PC-3 (cell line): ENCODE measurements at regions of chr1 and their contacts with region 1.

Region 1: DNA sequence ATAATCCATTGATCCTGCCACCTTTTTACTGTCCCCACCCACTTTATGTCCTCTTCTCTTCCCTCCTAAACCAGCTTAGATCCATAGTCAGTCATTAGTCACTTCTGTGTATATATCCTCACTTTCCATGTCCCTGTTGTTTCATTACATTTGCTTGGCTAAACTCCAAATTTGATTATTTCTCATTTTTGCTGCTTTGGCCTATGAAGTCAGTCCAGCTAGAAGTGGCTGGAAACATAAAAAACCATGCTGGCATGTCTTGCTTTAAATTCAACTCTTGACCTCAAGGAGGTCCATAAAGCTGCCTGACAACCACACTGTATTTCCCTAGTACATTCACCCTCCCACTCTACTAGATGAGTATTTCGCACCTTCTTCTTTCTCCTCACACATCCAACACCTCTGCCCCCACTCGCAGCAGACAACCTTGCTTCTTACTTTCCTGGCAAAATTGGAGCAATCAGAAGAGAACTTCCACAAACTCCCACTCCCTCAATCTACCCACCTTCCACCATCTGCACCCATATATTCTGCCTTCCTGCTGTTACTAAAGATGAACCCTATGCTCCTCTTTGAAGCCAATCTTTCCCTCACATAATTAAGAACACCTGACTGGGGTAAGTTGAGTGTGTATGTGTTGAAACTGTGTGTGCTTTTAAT is 72.1 kb downstream of the ZNF648 start:
- DNase-seq: no peak
- ATAC-seq: no peak
- H3K4me3 ChIP-seq: no peak overlapping the region
- H3K27ac ChIP-seq: no peak overlapping the region
- H3K4me1 ChIP-seq: no peaks in the 10 kb centered on the region
- H3K27me3 ChIP-seq: peaks cover 32% of the 10 kb centered on the region
- CTCF ChIP-seq: no peak

Region 2: GRCh38 chr1:181953596-181953995 is 35.8 kb before region 1 on chr1:
- CTCF ChIA-PET with region 1: no interaction called
- POLR2A ChIA-PET with region 1: interaction called, 20 read pairs
- intact Hi-C with region 1: no loop called
- DNase-seq: no peak
- ATAC-seq: no peak
- H3K4me3 ChIP-seq: no peak overlapping the region
- H3K27ac ChIP-seq: no peak overlapping the region
- H3K4me1 ChIP-seq: no peaks in the 10 kb centered on the region
- H3K27me3 ChIP-seq: no peaks in the 10 kb centered on the region
- CTCF ChIP-seq: no peak

Region 3: GRCh38 chr1:182029379-182030331 is 40.3 kb after region 1 on chr1:
- CTCF ChIA-PET with region 1: no interaction called
- POLR2A ChIA-PET with region 1: no interaction called
- intact Hi-C with region 1: no loop called
- DNase-seq: peak; percentile 88
- ATAC-seq: peak; percentile 93
- H3K4me3 ChIP-seq: peak overlapping the region; percentile 58
- H3K27ac ChIP-seq: no peak overlapping the region
- H3K4me1 ChIP-seq: no peaks in the 10 kb centered on the region; the same call in 1 of the 2 replicates
- H3K27me3 ChIP-seq: no peaks in the 10 kb centered on the region
- CTCF ChIP-seq: peak; percentile 17; the same call in 1 of the 2 replicates